Psoas muscle (tissue), 8 donors: ENCODE measurements at regions of chr1 and their contacts with region 1.

Region 1: GRCh38 chr1:84668185-84668584 is 22.1 kb downstream of the SSX2IP start:
- DNase-seq: no peak
- ATAC-seq: peak in 2 of 4 donors; percentile 49 to 50
- H3K4me3 ChIP-seq: no peak overlapping the region
- H3K27ac ChIP-seq: no peak overlapping the region
- H3K4me1 ChIP-seq: no peaks in the 10 kb centered on the region
- H3K27me3 ChIP-seq: no peaks in the 10 kb centered on the region
- CTCF ChIP-seq: peak; percentile 25

Region 2: GRCh38 chr1:84758968-84759491 is 90.8 kb after region 1 on chr1:
- intact Hi-C with region 1: loop called (anchors 5 to 10 kb)
- DNase-seq: no peak
- ATAC-seq: peak; percentile 47 to 65 (median 60)
- H3K4me3 ChIP-seq: peak overlapping the region; percentile 44
- H3K27ac ChIP-seq: no peak overlapping the region
- H3K4me1 ChIP-seq: no peaks in the 10 kb centered on the region
- H3K27me3 ChIP-seq: no peaks in the 10 kb centered on the region
- CTCF ChIP-seq: no peak

Region 3: DNA sequence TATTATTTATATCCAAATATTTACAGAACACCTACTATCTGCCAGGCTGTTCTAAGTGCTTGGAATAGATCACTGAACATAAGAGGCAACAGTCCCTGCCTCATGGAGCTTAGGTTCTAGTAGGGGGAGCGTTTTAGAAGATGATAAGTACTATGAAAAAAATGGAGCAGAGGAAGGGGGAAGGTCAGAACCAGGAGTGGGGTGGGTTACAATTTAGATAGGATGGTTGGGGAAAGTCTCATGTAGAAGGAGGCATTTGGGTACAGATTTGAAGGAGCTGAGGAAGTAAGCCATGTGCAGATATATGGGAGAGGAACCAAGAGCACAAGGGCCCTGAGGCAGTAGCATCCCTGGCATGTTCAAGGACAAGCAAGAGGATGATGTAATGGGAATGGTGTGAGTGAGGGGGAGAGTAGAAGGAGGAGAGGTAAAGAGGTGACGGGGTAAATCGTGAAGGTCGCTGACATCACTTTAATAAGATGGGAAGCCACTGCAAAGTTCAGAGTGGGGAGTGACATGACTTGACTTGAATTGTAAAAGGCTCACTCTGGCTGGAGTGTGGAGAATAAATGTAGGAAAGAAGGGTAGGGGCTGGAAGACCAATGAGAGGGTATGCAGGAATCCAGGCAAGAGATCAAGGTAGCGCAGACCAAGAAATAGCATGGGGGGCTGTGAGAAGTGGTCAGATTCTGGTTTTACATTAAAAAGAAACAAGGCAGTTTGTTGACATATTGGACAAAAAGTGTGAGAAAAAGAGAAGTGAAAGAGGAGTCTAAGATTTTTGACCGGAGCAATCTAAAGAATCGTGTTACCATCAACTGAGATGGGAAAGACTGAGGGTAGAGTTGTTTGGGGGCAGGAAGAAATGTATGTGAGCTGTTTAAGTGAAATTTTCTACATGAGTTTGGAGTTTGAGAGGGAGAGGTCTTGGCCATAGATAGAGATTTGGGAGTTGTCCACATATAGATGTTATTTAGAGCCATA is 132.2 kb after region 1 on chr1:
- intact Hi-C with region 1: no loop called
- DNase-seq: no peak
- ATAC-seq: no peak
- H3K4me3 ChIP-seq: no peak overlapping the region
- H3K27ac ChIP-seq: no peak overlapping the region
- H3K4me1 ChIP-seq: no peaks in the 10 kb centered on the region
- H3K27me3 ChIP-seq: peaks cover 0 to 3% (median 1%) of the 10 kb centered on the region in 3 donors
- CTCF ChIP-seq: no peak